ENCODE measurements at regions of chr19 and their contacts with region 1.

Region 1: GRCh38 chr19:33860312-33861090 is 63.8 kb downstream of the KCTD15 start:
- H3K4me3 ChIP-seq: no peak overlapping the region
- H3K27ac ChIP-seq: no peak overlapping the region
- H3K4me1 ChIP-seq: 0 out of 2 replicates have a peak, but pooled peaks cover 3% of the 10 kb centered on the region
- CTCF ChIP-seq: no peak

Region 2: DNA sequence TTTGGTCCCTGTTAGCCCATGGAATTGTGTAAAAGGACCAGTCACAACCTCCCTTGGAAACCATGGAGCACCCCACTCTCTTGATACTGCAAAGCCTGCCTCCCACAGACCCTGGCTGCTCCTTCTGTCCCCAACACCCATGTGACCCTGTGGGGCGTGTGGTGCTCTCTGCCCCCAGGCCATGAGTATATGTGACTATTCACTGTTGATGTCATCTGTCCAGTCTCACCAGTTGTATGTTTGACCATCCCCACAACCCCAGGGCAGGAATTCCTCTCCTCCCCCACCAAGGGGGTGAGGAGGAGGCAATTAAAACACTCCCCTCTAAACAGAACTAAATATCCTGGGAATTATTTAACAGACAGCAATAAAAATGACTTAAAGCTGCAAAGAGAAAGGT is 28.7 kb before region 1 on chr19:
- CTCF ChIA-PET with region 1: no interaction called
- POLR2A ChIA-PET with region 1: interaction called, 10 read pairs
- H3K4me3 ChIP-seq: no peak overlapping the region
- H3K27ac ChIP-seq: no peak overlapping the region
- H3K4me1 ChIP-seq: no peaks in the 10 kb centered on the region
- CTCF ChIP-seq: no peak

Region 3: GRCh38 chr19:33883859-33884519 is 23.5 kb after region 1 on chr19:
- CTCF ChIA-PET with region 1: no interaction called
- POLR2A ChIA-PET with region 1: no interaction called
- H3K4me3 ChIP-seq: no peak overlapping the region
- H3K27ac ChIP-seq: peak overlapping the region; percentile 57; the same call in 1 of the 2 replicates
- H3K4me1 ChIP-seq: peaks cover 11% of the 10 kb centered on the region
- CTCF ChIP-seq: no peak

Region 4: GRCh38 chr19:33921165-33921564 is 60.7 kb after region 1 on chr19:
- CTCF ChIA-PET with region 1: no interaction called
- POLR2A ChIA-PET with region 1: no interaction called
- H3K4me3 ChIP-seq: no peak overlapping the region
- H3K27ac ChIP-seq: no peak overlapping the region
- H3K4me1 ChIP-seq: no peaks in the 10 kb centered on the region
- CTCF ChIP-seq: no peak

Region 5: DNA sequence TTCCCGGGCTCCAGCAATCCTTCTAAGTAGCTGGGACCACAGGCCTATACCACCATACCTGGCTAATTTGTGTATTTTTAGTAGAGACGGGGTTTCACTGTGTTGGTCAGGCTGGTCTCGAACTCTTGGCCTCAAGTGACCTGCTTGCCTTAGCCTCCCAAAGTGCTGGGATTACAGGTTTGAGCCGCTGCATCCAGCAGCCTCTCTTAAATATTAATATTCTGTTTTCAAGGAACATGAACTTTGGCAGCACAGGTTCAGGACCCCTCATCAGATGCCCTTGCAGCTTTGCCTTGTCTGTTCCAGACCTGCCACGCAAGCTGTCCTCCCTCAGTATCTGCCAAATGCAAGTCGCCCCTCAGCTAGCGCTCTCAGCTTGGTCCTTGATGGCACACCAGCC is 103.0 kb after region 1 on chr19:
- CTCF ChIA-PET with region 1: no interaction called
- POLR2A ChIA-PET with region 1: no interaction called
- H3K4me3 ChIP-seq: no peak overlapping the region
- H3K27ac ChIP-seq: no peak overlapping the region
- H3K4me1 ChIP-seq: no peaks in the 10 kb centered on the region
- CTCF ChIP-seq: no peak

Measured in HEK293 (cell line).